ENCODE measurements at regions of chr2 and their contacts with region 1.

Region 1: DNA sequence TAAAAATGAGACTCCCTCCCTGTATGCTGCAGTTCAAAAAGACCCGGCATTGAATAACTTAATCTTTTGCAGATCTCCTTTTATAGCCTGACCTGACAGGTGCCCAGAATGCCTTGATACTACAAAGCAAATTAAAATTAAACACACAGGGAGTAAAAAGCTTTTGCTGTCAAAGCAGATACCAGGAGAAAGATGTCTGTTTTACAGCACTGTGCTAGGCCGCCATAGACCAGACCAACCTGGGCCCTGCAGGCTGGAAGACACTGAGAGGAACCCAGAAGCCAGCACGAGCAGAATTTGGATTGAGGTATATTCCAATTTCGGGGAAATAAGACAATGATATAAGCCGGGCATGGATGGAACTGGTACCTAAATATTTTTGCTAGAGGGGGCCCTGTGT is 602.8 kb upstream of the SOX11 start:
- DNase-seq: no peak
- H3K4me3 ChIP-seq: no peak overlapping the region
- H3K27ac ChIP-seq: no peak overlapping the region
- H3K4me1 ChIP-seq: no peaks in the 10 kb centered on the region
- H3K27me3 ChIP-seq: no peaks in the 10 kb centered on the region
- CTCF ChIP-seq: no peak
- POLR2A ChIP-seq: no peak

Region 2: GRCh38 chr2:5026552-5027234 is 62.7 kb before region 1 on chr2:
- CTCF ChIA-PET with region 1: no interaction called
- POLR2A ChIA-PET with region 1: no interaction called
- dilution Hi-C with region 1: no loop called
- intact Hi-C with region 1: loop called (anchors 2 kb)
- DNase-seq: no peak
- H3K4me3 ChIP-seq: no peak overlapping the region
- H3K27ac ChIP-seq: no peak overlapping the region
- H3K4me1 ChIP-seq: no peaks in the 10 kb centered on the region
- H3K27me3 ChIP-seq: no peaks in the 10 kb centered on the region
- CTCF ChIP-seq: no peak
- POLR2A ChIP-seq: no peak

Measured in endothelial cell of umbilical vein (primary cell).